ENCODE measurements at regions of chr14 and their contacts with region 1.

Region 1: GRCh38 chr14:75577729-75578101 is 705 bp upstream of the FLVCR2 start:
- DNase-seq: peak; percentile 54
- H3K4me3 ChIP-seq: no peak overlapping the region
- H3K27ac ChIP-seq: no peak overlapping the region
- H3K4me1 ChIP-seq: no peaks in the 10 kb centered on the region
- CTCF ChIP-seq: peak; percentile 79

Region 2: GRCh38 chr14:75555769-75556168 is 21.9 kb before region 1 on chr14:
- CTCF ChIA-PET with region 1: no interaction called
- POLR2A ChIA-PET with region 1: no interaction called
- intact Hi-C with region 1: no loop called
- DNase-seq: no peak
- H3K4me3 ChIP-seq: no peak overlapping the region
- H3K27ac ChIP-seq: no peak overlapping the region
- H3K4me1 ChIP-seq: no peaks in the 10 kb centered on the region
- CTCF ChIP-seq: no peak

Region 3: DNA sequence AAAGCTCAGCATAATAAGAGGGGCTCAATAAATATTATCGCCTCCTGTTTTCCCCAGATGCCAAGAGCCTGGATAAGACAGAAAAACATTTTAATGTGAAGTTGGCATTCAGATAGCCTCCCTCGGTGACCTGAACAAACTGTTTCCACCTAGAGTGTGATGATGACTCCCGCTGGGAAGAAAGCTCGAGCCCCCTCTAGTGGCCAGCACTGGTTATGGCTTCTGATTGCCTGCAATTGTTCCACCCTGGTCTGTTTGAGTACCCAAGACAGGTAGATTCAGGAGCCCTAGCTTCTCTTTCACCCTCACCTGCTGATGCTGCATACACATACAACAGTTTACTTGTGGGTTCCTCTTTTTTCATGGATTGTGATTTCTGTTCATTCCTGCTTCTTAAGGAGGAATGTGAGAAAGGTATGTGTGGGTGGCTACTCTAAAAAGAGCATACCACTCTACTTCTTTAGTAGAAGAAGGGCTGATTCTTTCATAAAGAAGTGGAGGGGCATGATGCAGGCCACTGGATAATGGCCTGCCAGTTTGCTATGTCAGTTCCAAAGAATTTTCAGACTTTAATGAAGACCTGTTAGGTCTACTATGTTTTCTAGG is 76.5 kb after region 1 on chr14:
- CTCF ChIA-PET with region 1: interaction called, 3 read pairs
- POLR2A ChIA-PET with region 1: interaction called, 5 read pairs
- intact Hi-C with region 1: loop called (anchors 1 kb)
- DNase-seq: peak; percentile 72
- H3K4me3 ChIP-seq: no peak overlapping the region
- H3K27ac ChIP-seq: no peak overlapping the region
- H3K4me1 ChIP-seq: no peaks in the 10 kb centered on the region
- CTCF ChIP-seq: peak; percentile 98